Posterior vena cava (tissue), 2 donors: ENCODE measurements at regions of chr6 and their contacts with region 1.

Region 1: GRCh38 chr6:72084992-72085569 is 198.7 kb downstream of the RIMS1 start:
- DNase-seq: no peak

Region 2: DNA sequence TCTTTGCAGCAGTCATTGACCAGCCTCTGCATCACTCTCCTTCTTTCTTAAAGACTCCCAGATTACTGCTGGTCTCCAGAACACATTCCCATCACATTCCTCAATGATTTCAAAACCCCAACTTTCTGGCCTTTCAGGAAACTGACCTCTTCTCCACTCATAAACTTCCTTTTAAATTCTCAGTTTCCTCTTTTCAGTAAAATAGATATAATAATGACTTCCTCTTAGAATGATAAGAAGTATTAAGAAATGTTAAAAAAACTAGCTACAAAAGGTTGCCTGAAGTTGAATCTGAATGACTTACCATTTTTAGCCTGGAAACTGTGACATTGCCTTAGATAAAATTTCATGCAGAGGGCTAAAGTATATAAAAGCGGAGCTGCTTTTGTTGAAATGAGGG is 557.2 kb before region 1 on chr6:
- intact Hi-C with region 1: loop called (anchors 5 to 10 kb)
- DNase-seq: no peak

Region 3: DNA sequence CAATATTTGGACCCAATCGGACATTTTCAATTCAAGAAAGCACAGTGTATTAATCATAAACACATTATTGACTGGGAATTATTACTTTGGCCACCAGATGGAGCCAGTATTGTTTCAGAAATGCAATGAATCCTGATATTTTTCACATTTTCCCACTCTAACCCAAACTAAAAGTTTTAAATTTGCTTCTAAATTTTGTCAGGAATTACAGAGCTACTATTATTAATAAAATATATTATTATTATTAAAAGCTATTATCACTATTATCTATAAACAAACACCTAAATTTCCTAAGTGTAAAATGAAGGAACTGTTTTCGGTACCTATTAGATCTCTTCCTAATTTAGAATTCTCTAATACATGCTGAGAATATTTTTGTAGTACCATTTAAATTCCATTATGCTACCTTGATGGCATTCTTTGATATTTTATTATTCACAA is 551.1 kb before region 1 on chr6:
- intact Hi-C with region 1: loop called (anchors 5 to 10 kb)
- DNase-seq: no peak